Activated T-helper 1 cell treated with anti-CD3 and anti-CD28 coated beads, Interleukin-12 subunit alpha, Interleukin-12 subunit beta, Interleukin-2, Interleukin-4 antibody, amounts not matched to agents 30 ng/mL and 10 ng/mL and 1 ng/mL, durations not matched to agents 14 hours and 24 hours and 36 hours (primary cell): ENCODE measurements at regions of chr6 and their contacts with region 1.

Region 1: GRCh38 chr6:73309769-73310502 is 44.1 kb downstream of the DPPA5 start:
- DNase-seq: peak; percentile 45
- H3K4me3 Mint-ChIP-seq: peak overlapping the region; percentile 95
- H3K27ac Mint-ChIP-seq: peak overlapping the region; percentile 72
- H3K4me1 Mint-ChIP-seq: peaks cover 25% of the 10 kb centered on the region
- H3K27me3 Mint-ChIP-seq: peaks cover 38% of the 10 kb centered on the region

Region 2: GRCh38 chr6:73216859-73217258 is 93.1 kb before region 1 on chr6:
- intact Hi-C with region 1: no loop called
- DNase-seq: no peak
- H3K4me3 Mint-ChIP-seq: no peak overlapping the region
- H3K27ac Mint-ChIP-seq: no peak overlapping the region
- H3K4me1 Mint-ChIP-seq: no peaks in the 10 kb centered on the region
- H3K27me3 Mint-ChIP-seq: peaks cover 6% of the 10 kb centered on the region

Region 3: GRCh38 chr6:73262671-73263569 is 47.0 kb before region 1 on chr6 and contains the start of gene KHDC1:
- intact Hi-C with region 1: loop called (anchors 1 kb)
- DNase-seq: peak; percentile 57
- H3K4me3 Mint-ChIP-seq: peak within 1 kb of the TSS; percentile 84
- H3K27ac Mint-ChIP-seq: peak within 1 kb of the TSS; percentile 75
- H3K4me1 Mint-ChIP-seq: peaks cover 38% of the 10 kb centered on the region
- H3K27me3 Mint-ChIP-seq: no peaks in the 10 kb centered on the region
- total RNA-seq, gene KHDC1: 4.8 and 6.4 TPM in 2 replicates